Panc1 (cell line): ENCODE measurements at regions of chr1 and their contacts with region 1.

Region 1: DNA sequence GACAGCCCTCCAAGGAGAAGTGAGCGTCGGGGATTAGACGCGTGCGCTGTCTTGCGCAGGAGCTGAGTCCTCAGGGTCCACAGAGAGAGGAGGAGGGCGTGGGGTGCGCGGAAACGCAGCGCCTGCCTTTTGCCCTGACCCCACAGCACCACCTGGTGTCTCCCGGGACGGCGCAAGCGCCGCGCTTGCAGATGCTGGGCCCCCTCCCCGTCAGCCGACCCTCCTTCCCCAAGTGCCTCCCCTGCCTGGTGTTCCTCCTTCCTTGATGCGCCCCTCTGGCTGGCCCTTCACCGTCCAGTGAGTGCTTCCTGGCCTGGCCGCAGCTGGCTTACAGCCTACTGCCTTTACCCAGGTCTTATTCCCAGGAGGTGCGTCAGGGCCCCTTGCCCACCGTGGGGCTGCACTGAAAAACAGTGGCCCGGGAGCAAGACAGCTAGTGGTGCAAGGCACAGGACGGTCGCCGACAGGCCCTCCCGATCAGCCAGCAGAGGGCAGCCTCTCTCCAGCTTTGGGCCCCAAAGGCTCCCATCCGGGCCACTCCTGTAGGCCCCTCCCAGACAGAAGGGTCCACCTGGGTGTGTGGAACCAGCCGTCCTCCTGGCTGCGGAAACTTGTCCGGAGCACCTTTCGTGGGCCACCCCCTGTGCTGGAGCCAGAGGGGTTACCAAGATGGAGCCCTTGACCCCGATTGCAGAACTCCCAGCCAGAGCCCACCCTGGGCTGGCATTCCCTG is 12.9 kb upstream of the PHLDA3 start:
- DNase-seq: no peak
- ATAC-seq: peak; percentile 93
- H3K4me3 ChIP-seq: peak overlapping the region in 1 of 2 experiments; percentile 53; a peak in 2 of 4 replicates
- H3K27ac ChIP-seq: peak overlapping the region; percentile 70; the same call in 1 of the 2 replicates
- H3K4me1 ChIP-seq: peaks cover 14% of the 10 kb centered on the region
- H3K27me3 ChIP-seq: no peaks in the 10 kb centered on the region
- CTCF ChIP-seq: peak; percentile 94

Region 2: GRCh38 chr1:201447911-201448871 is 33.7 kb before region 1 on chr1:
- CTCF ChIA-PET with region 1: interaction called, 25 read pairs
- POLR2A ChIA-PET with region 1: no interaction called
- in situ Hi-C with region 1: no loop called
- intact Hi-C with region 1: no loop called
- DNase-seq: no peak
- ATAC-seq: peak; percentile 98
- H3K4me3 ChIP-seq: no peak overlapping the region
- H3K27ac ChIP-seq: no peak overlapping the region
- H3K4me1 ChIP-seq: peaks cover 6% of the 10 kb centered on the region
- H3K27me3 ChIP-seq: no peaks in the 10 kb centered on the region
- CTCF ChIP-seq: peak; percentile 95

Region 3: DNA sequence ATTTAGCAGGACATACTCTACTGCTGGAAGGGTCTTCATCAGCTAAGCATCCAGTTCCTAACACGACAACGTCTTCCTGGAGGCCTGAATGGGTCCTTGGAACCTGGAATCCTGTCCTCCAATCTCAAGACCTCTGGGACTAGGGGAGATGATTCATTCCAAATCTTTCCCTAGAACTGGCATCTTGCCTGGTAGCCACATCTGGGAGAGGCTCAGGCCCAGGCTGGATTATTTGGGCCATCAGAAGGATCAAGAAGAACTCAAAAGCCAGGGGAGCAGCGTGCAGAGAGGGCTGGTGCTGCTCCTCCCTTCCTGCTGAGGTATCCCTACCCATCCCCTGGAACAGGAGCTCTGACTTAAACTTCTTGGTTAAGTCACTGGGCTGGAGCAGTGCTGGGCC is 10.2 kb before region 1 on chr1:
- CTCF ChIA-PET with region 1: interaction called, 14 read pairs
- POLR2A ChIA-PET with region 1: no interaction called
- in situ Hi-C with region 1: no loop called
- intact Hi-C with region 1: no loop called
- DNase-seq: no peak
- ATAC-seq: no peak
- H3K4me3 ChIP-seq: no peak overlapping the region
- H3K27ac ChIP-seq: no peak overlapping the region
- H3K4me1 ChIP-seq: no peaks in the 10 kb centered on the region; the same call in 1 of the 2 replicates
- H3K27me3 ChIP-seq: no peaks in the 10 kb centered on the region
- CTCF ChIP-seq: no peak